A549 (cell line): ENCODE measurements at regions of chr2 and their contacts with region 1.

Region 1: DNA sequence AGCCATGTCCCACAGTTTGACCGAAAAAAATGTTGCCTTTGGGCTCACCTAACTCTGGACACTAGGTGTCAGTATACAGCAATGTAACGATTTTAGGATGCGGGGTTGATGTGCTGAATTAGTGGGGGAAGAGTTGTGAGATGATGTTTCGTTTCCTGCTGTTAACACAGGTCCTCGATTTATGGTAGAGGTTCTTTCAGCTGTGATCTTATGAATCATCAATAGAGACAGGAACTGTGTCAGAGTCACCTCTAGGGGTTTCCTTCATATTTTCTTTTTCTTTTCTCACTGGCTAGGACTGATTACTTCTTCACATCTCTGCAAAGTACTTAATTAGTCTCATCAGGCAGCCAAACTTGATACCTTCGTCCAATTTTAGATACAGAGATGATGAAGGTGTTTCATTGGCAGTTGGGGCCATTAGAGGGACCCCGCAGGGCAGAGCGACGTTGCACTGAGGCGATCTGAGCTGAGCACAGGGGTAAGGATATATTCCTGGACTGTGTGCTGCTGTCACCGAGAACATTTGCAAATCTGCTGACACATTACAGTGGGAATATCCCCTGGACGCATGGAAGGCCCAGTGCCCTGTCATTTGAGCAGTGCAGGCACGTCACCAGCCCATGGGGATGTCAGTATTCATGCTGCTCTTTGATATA is 10.2 kb upstream of the MMADHC start:
- DNase-seq: peak; percentile 35 to 83
- ATAC-seq: peak; percentile 88 to 91
- H3K4me3 ChIP-seq: peak overlapping the region; percentile 17; the same call in 2 of the 3 replicates
- H3K27ac ChIP-seq: peak overlapping the region; percentile 59 to 68
- H3K4me1 ChIP-seq: peaks cover 41% of the 10 kb centered on the region
- CTCF ChIP-seq: peak; percentile 93
- EP300 ChIP-seq: no peak
- POLR2A ChIP-seq: no peak
- RAD21 ChIP-seq: peak; percentile 96 to 98

Region 2: GRCh38 chr2:150487537-150488429 is 890.0 kb after region 1 on chr2 and contains the start of gene RND3:
- CTCF ChIA-PET with region 1: interaction called, 10 read pairs
- POLR2A ChIA-PET with region 1: no interaction called
- DNase-seq: peak; percentile 86 to 99
- ATAC-seq: peak; percentile 62 to 64
- H3K4me3 ChIP-seq: peak within 1 kb of the TSS; percentile 84
- H3K27ac ChIP-seq: peak within 1 kb of the TSS; percentile 85 to 98
- H3K4me1 ChIP-seq: peaks cover 45% of the 10 kb centered on the region
- CTCF ChIP-seq: peak; percentile 87
- EP300 ChIP-seq: no peak
- POLR2A ChIP-seq: peak; percentile 100
- RAD21 ChIP-seq: peak; percentile 87 to 92
- polyA plus RNA-seq, gene RND3: 127 and 137 TPM in 2 replicates

Region 3: GRCh38 chr2:150610671-150611279 is 1013.0 kb after region 1 on chr2:
- CTCF ChIA-PET with region 1: interaction called, 10 read pairs
- POLR2A ChIA-PET with region 1: no interaction called
- DNase-seq: peak; percentile 56 to 72
- ATAC-seq: peak; percentile 89 to 94; a peak in 5 of 6 replicates
- H3K4me3 ChIP-seq: no peak overlapping the region
- H3K27ac ChIP-seq: peak overlapping the region; percentile 59 to 65; a peak in 5 of 6 replicates
- H3K4me1 ChIP-seq: peaks cover 28% of the 10 kb centered on the region
- CTCF ChIP-seq: peak; percentile 92
- EP300 ChIP-seq: no peak
- POLR2A ChIP-seq: no peak
- RAD21 ChIP-seq: peak; percentile 96 to 97

Region 4: DNA sequence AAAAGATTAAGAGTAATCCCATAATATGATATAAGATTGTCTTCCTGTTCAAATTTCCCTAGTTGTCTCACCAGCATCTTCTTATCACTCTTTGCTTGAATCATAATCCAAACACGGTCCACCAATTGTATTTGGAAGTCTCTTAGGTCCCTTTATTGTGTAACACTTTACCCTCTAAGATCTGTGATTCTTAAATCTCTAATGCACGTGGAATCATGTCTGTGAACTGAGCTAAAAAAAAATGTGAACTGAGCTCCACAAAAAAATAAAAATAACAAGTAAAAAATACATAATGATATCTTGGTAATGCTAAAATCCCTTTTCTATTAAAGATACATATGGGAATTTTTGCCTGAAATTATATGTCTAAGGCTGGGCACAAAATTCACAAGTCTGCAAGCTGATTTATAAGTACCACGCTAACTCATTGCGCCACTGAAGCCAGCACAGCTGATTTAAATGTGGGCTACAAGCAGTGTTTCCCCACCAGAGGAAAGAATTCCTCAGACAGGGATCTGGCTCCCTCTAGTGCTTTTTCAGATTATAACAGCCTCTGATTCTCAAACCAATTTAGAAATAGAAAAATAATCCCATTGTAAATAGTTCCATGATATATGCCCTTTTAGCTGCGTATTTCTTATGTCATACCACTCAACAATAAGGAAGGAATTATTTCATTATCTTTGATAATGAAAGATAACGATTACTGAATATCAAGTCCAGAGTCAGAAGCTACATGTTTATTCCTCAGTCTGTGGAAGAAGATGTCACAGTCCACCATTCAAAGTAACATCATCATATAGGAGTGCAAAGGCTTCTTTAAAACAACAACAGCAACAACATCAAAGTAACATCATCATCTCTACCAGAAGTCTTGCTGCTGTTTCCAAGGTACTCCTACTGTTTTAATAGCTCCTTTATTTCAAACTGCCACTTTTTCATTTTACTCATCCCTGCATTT is 1641.0 kb after region 1 on chr2:
- CTCF ChIA-PET with region 1: interaction called, 96 read pairs
- POLR2A ChIA-PET with region 1: no interaction called
- DNase-seq: peak; percentile 49 to 62
- ATAC-seq: peak; percentile 83 to 84; a peak in 5 of 6 replicates
- H3K4me3 ChIP-seq: no peak overlapping the region
- H3K27ac ChIP-seq: no peak overlapping the region
- H3K4me1 ChIP-seq: peaks cover 9% of the 10 kb centered on the region; the same call in 1 of the 3 replicates
- CTCF ChIP-seq: peak; percentile 91
- EP300 ChIP-seq: no peak
- POLR2A ChIP-seq: no peak
- RAD21 ChIP-seq: peak; percentile 92 to 96